Natural killer cell (primary cell): ENCODE measurements at regions of chr4 and their contacts with region 1.

Region 1: GRCh38 chr4:76748649-76749048 is 149.3 kb downstream of the SOWAHB start:
- DNase-seq: peak in 1 of 2 donors; percentile 29
- ATAC-seq: no peak
- H3K4me3 ChIP-seq: no peak overlapping the region
- H3K4me3 Mint-ChIP-seq: no peak overlapping the region
- H3K27ac ChIP-seq: no peak overlapping the region
- H3K27ac Mint-ChIP-seq: no peak overlapping the region
- H3K4me1 ChIP-seq: no peaks in the 10 kb centered on the region
- H3K4me1 Mint-ChIP-seq: no peaks in the 10 kb centered on the region
- H3K27me3 ChIP-seq: no peaks in the 10 kb centered on the region
- H3K27me3 Mint-ChIP-seq: peaks cover 20 to 31% of the 10 kb centered on the region in 2 donors
- CTCF ChIP-seq: no peak

Region 2: GRCh38 chr4:76459291-76459723 is 289.3 kb before region 1 on chr4:
- intact Hi-C with region 1: no loop called
- DNase-seq: no peak
- ATAC-seq: no peak
- H3K4me3 ChIP-seq: no peak overlapping the region
- H3K4me3 Mint-ChIP-seq: no peak overlapping the region
- H3K27ac ChIP-seq: no peak overlapping the region
- H3K27ac Mint-ChIP-seq: no peak overlapping the region
- H3K4me1 ChIP-seq: no peaks in the 10 kb centered on the region
- H3K4me1 Mint-ChIP-seq: no peaks in the 10 kb centered on the region
- H3K27me3 ChIP-seq: no peaks in the 10 kb centered on the region
- H3K27me3 Mint-ChIP-seq: peaks cover 0 to 6% of the 10 kb centered on the region in 2 donors
- CTCF ChIP-seq: no peak

Region 3: GRCh38 chr4:76723924-76724323 is 24.7 kb before region 1 on chr4:
- intact Hi-C with region 1: loop called (anchors 1 kb)
- DNase-seq: no peak
- ATAC-seq: no peak
- H3K4me3 ChIP-seq: no peak overlapping the region
- H3K4me3 Mint-ChIP-seq: no peak overlapping the region
- H3K27ac ChIP-seq: no peak overlapping the region
- H3K27ac Mint-ChIP-seq: no peak overlapping the region
- H3K4me1 ChIP-seq: no peaks in the 10 kb centered on the region
- H3K4me1 Mint-ChIP-seq: no peaks in the 10 kb centered on the region
- H3K27me3 ChIP-seq: no peaks in the 10 kb centered on the region
- H3K27me3 Mint-ChIP-seq: peaks cover 8 to 10% of the 10 kb centered on the region in 2 donors
- CTCF ChIP-seq: no peak